ENCODE measurements at regions of chr18 and their contacts with region 1.

Region 1: GRCh38 chr18:44130376-44130942 is 550.2 kb upstream of the SETBP1 start:
- DNase-seq: peak in 1 of 3 donors; percentile 61
- ATAC-seq: peak; percentile 38
- H3K4me3 ChIP-seq: no peak overlapping the region
- H3K4me1 ChIP-seq: no peaks in the 10 kb centered on the region
- CTCF ChIP-seq: peak; percentile 24

Region 2: DNA sequence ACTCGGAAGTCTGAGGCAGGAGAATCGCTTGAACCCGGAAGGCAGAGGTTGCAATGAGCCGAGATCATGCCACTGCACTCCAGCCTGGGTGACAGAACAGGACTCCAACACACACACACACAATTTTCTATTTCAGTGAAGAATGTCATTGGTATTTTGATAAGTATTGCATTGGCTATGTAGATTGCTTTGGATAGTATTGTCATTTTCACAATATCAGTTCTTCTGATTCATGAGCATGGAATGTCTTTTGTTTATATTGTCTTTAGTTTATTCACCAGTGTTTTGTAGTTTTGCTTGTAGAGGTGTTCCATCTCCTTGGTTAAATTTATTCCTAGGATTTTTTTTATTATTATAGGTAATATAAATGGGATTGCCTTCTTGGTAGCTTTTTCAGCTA is 159.8 kb before region 1 on chr18:
- intact Hi-C with region 1: no loop called
- DNase-seq: no peak
- ATAC-seq: no peak
- H3K4me3 ChIP-seq: no peak overlapping the region
- H3K4me1 ChIP-seq: no peaks in the 10 kb centered on the region
- CTCF ChIP-seq: no peak

Region 3: DNA sequence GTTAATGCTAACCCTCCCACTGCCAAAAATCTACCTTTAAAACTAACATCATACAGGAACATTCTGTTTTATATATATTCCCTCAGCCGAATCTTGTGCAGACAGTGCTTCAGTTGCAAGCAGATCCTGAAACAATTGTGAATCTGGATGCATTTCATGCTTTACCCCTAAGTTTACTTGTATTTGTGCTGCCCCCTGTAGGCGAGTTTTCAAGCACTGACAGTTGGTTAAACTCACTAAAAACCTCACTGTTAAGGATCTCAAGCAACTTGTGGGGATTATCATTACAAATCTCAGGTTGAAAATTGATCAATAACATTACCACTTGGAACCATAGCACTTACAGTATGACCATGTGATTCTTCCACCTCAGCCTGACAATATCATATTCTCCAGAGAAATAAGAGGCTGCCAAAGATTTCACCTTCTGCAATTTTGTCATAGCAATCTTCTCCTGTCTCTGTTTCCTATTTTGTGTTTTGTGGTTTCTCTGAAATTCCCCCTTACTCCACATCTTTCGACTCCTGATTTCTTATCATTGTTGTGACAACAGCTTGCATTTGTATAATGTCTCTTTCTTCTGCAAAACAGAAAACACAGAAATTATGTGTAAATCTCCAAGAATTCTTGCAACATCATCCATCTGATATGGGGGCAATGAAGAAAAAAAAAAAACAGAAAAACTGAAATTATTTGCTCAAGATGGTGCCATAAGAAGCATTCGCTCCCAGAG is 195.6 kb after region 1 on chr18:
- intact Hi-C with region 1: loop called in 1 of 2 experiments (anchors 10 kb)
- DNase-seq: peak in 2 of 3 donors; percentile 46 to 90
- ATAC-seq: no peak
- H3K4me3 ChIP-seq: no peak overlapping the region
- H3K4me1 ChIP-seq: no peaks in the 10 kb centered on the region
- CTCF ChIP-seq: peak; percentile 16

Region 4: DNA sequence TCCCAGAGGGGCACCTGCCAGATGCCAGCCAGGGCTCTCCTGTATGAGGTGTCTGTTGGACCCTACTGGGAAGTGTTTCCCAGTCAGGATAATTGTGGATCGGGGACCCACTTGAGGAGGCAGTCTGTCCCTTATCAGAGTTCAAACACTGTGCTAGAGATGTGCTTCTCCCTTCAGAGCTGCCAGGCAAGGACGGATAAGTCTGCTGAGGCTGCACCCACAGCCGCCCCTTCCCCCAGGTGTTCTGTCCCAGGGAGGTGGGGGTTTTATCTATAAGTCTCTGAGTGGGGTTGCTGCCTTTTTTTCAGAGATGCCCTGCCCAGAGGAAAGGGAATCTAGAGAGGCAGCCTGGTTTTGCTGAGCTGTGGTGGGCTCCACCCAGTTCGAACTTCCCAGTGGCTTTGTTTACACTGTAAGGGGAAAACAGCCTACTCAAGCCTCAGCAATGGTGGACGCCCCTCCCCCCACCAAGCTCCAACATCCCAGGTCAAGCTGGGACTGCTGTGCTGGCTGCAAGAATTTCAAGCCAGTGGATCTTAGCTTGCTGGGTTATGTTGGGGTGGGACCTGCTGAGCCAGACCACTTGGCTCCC is 226.2 kb after region 1 on chr18:
- intact Hi-C with region 1: no loop called
- DNase-seq: no peak
- ATAC-seq: no peak
- H3K4me3 ChIP-seq: no peak overlapping the region
- H3K4me1 ChIP-seq: no peaks in the 10 kb centered on the region
- CTCF ChIP-seq: no peak

Measured in mucosa of descending colon (tissue), 3 donors.